Naive thymus-derived CD4-positive, alpha-beta T cell (primary cell): ENCODE measurements at regions of chr2 and their contacts with region 1.

Region 1: DNA sequence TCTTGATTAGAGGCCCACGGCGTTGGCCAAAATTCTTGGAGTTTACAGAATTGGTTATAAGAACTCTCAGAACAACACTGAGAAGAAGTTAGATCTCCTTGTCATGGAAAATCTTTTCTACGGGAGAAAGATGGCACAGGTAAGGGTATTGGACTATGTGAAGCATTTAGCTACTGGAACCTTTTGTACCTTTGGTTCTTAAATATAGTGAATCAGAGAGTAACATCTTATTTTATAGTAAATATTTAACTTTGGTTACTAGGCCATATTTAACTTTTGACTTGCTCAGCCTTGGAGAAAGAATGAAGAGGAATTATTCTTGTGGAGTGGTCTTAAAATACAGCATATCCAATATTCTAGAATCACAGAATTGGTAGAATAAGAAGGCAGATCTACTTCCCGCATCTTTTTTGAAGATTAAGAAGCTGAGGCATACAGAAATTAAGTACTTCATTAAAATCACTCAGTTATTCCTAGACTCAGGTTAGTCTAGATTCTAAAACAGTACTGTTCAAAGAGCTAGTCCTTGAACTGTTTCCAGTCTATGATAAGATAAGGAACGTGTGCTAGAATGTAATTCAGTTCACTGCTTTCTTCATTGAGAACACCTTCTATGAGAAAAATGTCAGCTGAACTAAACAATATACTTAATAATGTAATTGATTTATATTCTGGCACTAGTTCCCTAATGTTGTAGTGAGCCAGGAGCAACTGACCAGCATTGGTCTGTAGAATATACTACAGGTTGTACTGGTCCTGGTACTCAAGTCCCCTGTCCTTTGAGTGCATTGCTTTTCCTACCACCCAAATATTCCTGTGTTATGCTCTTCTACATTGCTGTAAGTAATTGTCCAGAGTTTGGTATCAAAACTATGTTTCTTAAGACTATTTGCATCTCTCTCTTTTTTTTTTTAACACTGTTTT is 53.7 kb upstream of the PTH2R start:
- DNase-seq: no peak
- ATAC-seq: no peak
- H3K4me3 ChIP-seq: no peak overlapping the region
- H3K4me3 Mint-ChIP-seq: no peak overlapping the region
- H3K27ac ChIP-seq: no peak overlapping the region
- H3K27ac Mint-ChIP-seq: peak overlapping the region in 3 of 9 donors; percentile 1 to 69 (median 7)
- H3K4me1 ChIP-seq: no peaks in the 10 kb centered on the region
- H3K4me1 Mint-ChIP-seq: peaks cover 0 to 5% (median 0%) of the 10 kb centered on the region in 7 donors
- H3K27me3 ChIP-seq: no peaks in the 10 kb centered on the region
- H3K27me3 Mint-ChIP-seq: no peaks in the 10 kb centered on the region

Region 2: DNA sequence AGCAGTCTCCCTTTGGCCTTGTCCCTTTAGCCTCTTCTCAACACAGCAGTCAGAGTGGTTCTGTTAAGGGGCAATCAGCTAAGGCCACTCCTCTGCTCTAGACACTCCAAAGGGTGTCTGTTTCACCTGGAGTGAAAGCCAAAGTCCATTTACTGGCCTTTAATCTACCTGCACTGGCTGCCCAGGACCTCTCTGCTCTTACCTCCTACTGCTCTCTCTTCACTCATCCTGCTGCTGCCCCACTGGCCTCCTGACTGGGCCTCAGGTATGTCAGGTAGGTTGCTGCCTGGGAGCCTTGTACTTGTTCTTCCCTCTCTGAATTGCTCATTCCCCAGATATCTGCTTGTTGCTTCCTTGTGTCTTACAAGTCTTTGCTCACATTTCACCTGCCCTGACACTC is 18.7 kb before region 1 on chr2:
- CTCF ChIA-PET with region 1: no interaction called
- POLR2A ChIA-PET with region 1: no interaction called
- intact Hi-C with region 1: loop called in 1 of 2 experiments (anchors 2 kb)
- DNase-seq: no peak
- ATAC-seq: no peak
- H3K4me3 ChIP-seq: no peak overlapping the region
- H3K4me3 Mint-ChIP-seq: no peak overlapping the region
- H3K27ac ChIP-seq: no peak overlapping the region
- H3K27ac Mint-ChIP-seq: peak overlapping the region in 6 of 9 donors; percentile 1 to 82 (median 42)
- H3K4me1 ChIP-seq: no peaks in the 10 kb centered on the region
- H3K4me1 Mint-ChIP-seq: no peaks in the 10 kb centered on the region
- H3K27me3 ChIP-seq: no peaks in the 10 kb centered on the region
- H3K27me3 Mint-ChIP-seq: no peaks in the 10 kb centered on the region

Region 3: GRCh38 chr2:209525834-209526281 is 1173.0 kb after region 1 on chr2:
- CTCF ChIA-PET with region 1: no interaction called
- POLR2A ChIA-PET with region 1: no interaction called
- intact Hi-C with region 1: no loop called
- DNase-seq: peak in 2 of 9 donors; percentile 3 to 4
- ATAC-seq: no peak
- H3K4me3 ChIP-seq: no peak overlapping the region
- H3K4me3 Mint-ChIP-seq: peak overlapping the region in 8 of 10 donors; percentile 8 to 79 (median 53)
- H3K27ac ChIP-seq: no peak overlapping the region
- H3K27ac Mint-ChIP-seq: no peak overlapping the region
- H3K4me1 ChIP-seq: no peaks in the 10 kb centered on the region
- H3K4me1 Mint-ChIP-seq: peaks cover 10 to 31% (median 21%) of the 10 kb centered on the region in 7 donors
- H3K27me3 ChIP-seq: no peaks in the 10 kb centered on the region
- H3K27me3 Mint-ChIP-seq: no peaks in the 10 kb centered on the region